ENCODE measurements at regions of chr16 and their contacts with region 1.

Region 1: DNA sequence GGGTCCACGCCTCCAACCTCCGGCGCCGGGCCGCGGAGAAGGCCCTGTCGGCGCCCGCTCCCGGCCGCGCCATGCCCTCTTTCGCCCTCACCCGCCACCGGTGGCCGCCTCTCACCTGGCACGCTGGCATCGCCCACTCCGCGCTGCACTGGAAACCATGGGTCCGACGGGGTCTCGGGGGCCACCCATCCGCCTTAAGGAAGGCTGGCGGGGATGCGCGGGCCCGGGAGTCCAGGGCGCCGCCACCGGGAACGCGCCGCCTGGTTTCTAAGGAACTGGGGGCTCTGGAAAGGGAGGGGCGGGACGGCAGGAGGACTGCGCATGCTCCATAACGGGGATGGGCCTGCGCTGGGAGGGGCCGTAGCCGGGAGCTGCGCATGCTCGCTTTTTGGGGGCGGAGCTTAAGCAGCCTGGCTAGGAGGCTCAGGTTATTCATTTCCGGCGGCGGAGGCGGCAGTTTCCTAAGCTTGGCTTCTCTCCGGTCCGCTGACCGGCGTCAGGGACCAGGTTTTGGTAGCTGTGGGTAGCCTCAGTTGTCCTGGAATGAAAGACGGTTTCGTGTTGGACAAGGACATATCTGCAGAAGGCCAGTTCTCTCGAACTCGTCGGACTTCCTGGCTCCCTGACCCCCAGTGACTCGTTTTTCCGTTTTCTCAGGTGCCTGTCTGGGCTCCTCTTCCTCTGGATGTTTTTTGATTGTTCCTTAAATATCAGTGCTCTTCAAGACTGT is at the start of gene GFOD2:
- DNase-seq: peak; percentile 95 to 100 (median 97)
- ATAC-seq: peak; percentile 96
- H3K4me3 ChIP-seq: peak within 1 kb of the TSS; percentile 68 to 90
- H3K4me3 Mint-ChIP-seq: peak within 1 kb of the TSS; percentile 98
- H3K27ac ChIP-seq: peak within 1 kb of the TSS; percentile 85 to 96
- H3K27ac Mint-ChIP-seq: peak within 1 kb of the TSS; percentile 99
- H3K4me1 ChIP-seq: peaks cover 15% of the 10 kb centered on the region
- H3K4me1 Mint-ChIP-seq: peaks cover 32% of the 10 kb centered on the region
- H3K27me3 ChIP-seq: no peaks in the 10 kb centered on the region
- H3K27me3 Mint-ChIP-seq: no peaks in the 10 kb centered on the region
- CTCF ChIP-seq: no peak
- total RNA-seq, gene GFOD2: 2.4 to 2.6 TPM

Region 2: DNA sequence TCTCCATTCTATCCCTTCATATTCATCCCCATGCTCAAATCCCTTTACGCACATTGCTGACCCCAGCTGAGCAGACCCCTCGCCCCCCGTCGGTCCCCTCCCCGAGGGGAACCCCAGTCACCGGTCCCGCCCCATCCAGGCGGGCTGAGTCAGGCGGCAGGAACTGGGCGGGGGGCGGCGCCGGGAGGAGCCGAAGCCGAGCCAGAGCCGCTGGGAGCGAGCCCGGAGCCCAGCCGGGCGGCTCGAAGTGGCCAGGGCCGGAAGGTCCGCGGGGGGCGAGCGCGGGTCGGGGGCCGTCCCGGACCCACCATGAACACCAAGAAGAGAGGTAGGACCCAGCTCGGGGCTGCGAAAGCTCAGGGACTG is 182.0 kb before region 1 on chr16:
- CTCF ChIA-PET with region 1: no interaction called
- POLR2A ChIA-PET with region 1: no interaction called
- intact Hi-C with region 1: loop called in 1 of 2 experiments (anchors 5 kb)
- DNase-seq: peak in 6 of 9 experiments; percentile 38 to 77 (median 58)
- ATAC-seq: peak; percentile 51
- H3K4me3 ChIP-seq: peak overlapping the region; percentile 83 to 85
- H3K4me3 Mint-ChIP-seq: peak overlapping the region; percentile 84
- H3K27ac ChIP-seq: peak overlapping the region; percentile 37 to 75
- H3K27ac Mint-ChIP-seq: peak overlapping the region; percentile 82
- H3K4me1 ChIP-seq: peaks cover 17% of the 10 kb centered on the region
- H3K4me1 Mint-ChIP-seq: peaks cover 33% of the 10 kb centered on the region
- H3K27me3 ChIP-seq: no peaks in the 10 kb centered on the region
- H3K27me3 Mint-ChIP-seq: no peaks in the 10 kb centered on the region
- CTCF ChIP-seq: no peak

Region 3: DNA sequence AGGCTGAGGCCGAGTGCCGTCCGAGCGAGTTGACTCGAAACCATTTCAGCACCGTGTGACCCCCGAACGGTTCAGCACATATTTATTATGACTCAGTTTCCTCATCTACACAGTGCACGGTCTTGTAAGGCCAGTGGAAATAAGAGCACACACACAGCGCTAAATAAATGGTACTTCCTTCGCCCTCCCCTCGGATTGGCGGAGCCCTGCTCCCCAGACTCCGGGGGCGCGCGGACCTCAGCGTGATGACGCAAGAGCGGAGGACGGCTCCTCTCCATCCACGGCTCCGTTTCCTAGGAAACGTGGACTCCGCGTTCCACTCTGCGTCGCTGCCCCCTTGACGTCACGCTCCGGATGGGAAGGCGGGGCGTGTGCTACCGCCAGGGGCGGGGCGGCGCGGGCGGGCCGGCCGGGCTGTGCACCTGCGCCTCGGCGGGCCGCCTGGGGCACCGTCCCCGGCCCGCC is 58.6 kb before region 1 on chr16 and contains the start of gene PARD6A:
- CTCF ChIA-PET with region 1: no interaction called
- POLR2A ChIA-PET with region 1: no interaction called
- intact Hi-C with region 1: loop called in 1 of 2 experiments (anchors 1 kb)
- DNase-seq: peak; percentile 89 to 99 (median 95)
- ATAC-seq: peak; percentile 76
- H3K4me3 ChIP-seq: peak within 1 kb of the TSS; percentile 83 to 100
- H3K4me3 Mint-ChIP-seq: peak within 1 kb of the TSS; percentile 94
- H3K27ac ChIP-seq: peak within 1 kb of the TSS; percentile 92 to 100
- H3K27ac Mint-ChIP-seq: peak within 1 kb of the TSS; percentile 93
- H3K4me1 ChIP-seq: peaks cover 20% of the 10 kb centered on the region
- H3K4me1 Mint-ChIP-seq: peaks cover 23% of the 10 kb centered on the region
- H3K27me3 ChIP-seq: no peaks in the 10 kb centered on the region
- H3K27me3 Mint-ChIP-seq: no peaks in the 10 kb centered on the region
- CTCF ChIP-seq: no peak
- total RNA-seq, gene PARD6A: 3.0 to 3.1 TPM

Region 4: DNA sequence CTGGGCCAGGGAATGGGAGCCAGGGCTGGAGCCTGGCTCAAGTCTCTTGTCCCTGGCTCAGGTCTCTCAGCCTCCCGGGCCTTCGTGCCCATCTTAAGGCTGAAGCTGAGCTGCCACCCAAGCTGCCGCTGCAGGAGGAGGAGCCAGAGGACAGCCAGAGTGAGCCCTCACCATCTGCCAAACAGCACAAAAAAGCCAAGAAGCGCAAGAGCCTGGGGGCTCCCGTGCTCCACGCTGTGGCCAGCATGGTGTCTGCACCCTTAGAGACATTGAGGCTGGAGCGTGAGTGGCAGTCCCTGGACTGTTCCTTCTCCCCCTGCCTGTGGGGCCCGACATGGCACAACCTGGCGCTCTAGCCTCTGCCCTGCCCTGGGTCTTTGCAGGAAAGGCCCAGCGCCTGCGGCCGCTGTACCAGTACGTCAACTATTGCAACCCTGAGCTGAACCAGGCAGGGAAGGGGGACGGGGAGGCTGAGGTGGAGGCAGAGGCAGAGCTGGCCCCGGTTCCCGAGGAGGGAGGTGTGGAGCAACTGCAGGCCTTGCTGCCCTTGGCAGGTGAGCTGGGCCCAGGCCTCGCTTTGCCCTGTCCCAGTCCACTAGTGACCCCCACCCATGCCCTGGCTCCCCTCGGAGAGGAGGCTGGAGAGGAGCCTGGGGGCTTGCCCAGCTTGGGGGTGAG is 51.3 kb before region 1 on chr16:
- CTCF ChIA-PET with region 1: no interaction called
- POLR2A ChIA-PET with region 1: no interaction called
- intact Hi-C with region 1: loop called in 1 of 2 experiments (anchors 2 kb)
- DNase-seq: peak; percentile 64 to 91 (median 78)
- ATAC-seq: peak; percentile 90
- H3K4me3 ChIP-seq: peak overlapping the region in 1 of 2 experiments; percentile 84
- H3K4me3 Mint-ChIP-seq: peak overlapping the region; percentile 82
- H3K27ac ChIP-seq: peak overlapping the region in 1 of 2 experiments; percentile 38
- H3K27ac Mint-ChIP-seq: no peak overlapping the region
- H3K4me1 ChIP-seq: peaks cover 17% of the 10 kb centered on the region
- H3K4me1 Mint-ChIP-seq: peaks cover 16% of the 10 kb centered on the region
- H3K27me3 ChIP-seq: no peaks in the 10 kb centered on the region
- H3K27me3 Mint-ChIP-seq: no peaks in the 10 kb centered on the region
- CTCF ChIP-seq: peak; percentile 65

Region 5: GRCh38 chr16:67750466-67750865 is 31.3 kb after region 1 on chr16:
- CTCF ChIA-PET with region 1: no interaction called
- POLR2A ChIA-PET with region 1: no interaction called
- intact Hi-C with region 1: no loop called
- DNase-seq: no peak
- ATAC-seq: no peak
- H3K4me3 ChIP-seq: no peak overlapping the region
- H3K4me3 Mint-ChIP-seq: no peak overlapping the region
- H3K27ac ChIP-seq: no peak overlapping the region
- H3K27ac Mint-ChIP-seq: no peak overlapping the region
- H3K4me1 ChIP-seq: no peaks in the 10 kb centered on the region
- H3K4me1 Mint-ChIP-seq: no peaks in the 10 kb centered on the region
- H3K27me3 ChIP-seq: no peaks in the 10 kb centered on the region
- H3K27me3 Mint-ChIP-seq: no peaks in the 10 kb centered on the region
- CTCF ChIP-seq: no peak

Region 6: DNA sequence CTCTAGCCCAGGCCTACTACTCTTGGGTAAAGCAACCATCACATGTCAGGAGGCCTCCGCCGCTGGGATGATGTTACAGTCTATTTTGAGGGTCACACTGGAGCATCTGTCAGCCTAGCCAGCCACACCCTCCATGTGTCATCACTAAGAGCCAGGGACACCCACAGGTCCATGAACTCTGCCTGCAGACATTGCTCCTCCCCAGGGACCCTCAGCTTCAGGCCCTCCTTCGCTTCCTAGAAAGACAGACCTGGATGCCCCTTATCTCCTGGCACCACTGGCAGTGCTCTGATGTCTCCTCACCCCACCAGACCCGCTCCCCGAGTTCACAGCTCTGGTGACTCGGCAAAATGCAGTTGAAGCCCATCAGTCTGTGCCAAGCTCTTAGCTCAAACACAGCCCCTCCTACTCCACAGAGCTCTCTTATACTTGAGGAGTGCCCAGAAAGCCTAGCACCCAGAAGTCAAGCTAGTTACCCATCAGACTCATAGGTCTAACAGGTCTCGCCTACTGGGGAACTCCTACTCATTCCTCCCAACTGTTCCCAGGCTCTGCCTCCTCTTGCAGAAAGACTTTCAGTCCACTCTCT is 81.2 kb after region 1 on chr16:
- CTCF ChIA-PET with region 1: no interaction called
- POLR2A ChIA-PET with region 1: no interaction called
- intact Hi-C with region 1: loop called in 1 of 2 experiments (anchors 1 kb)
- DNase-seq: no peak
- ATAC-seq: no peak
- H3K4me3 ChIP-seq: no peak overlapping the region
- H3K4me3 Mint-ChIP-seq: no peak overlapping the region
- H3K27ac ChIP-seq: no peak overlapping the region
- H3K27ac Mint-ChIP-seq: peak overlapping the region; percentile 25
- H3K4me1 ChIP-seq: peaks cover 41% of the 10 kb centered on the region
- H3K4me1 Mint-ChIP-seq: peaks cover 71% of the 10 kb centered on the region
- H3K27me3 ChIP-seq: no peaks in the 10 kb centered on the region
- H3K27me3 Mint-ChIP-seq: no peaks in the 10 kb centered on the region
- CTCF ChIP-seq: no peak

Region 7: DNA sequence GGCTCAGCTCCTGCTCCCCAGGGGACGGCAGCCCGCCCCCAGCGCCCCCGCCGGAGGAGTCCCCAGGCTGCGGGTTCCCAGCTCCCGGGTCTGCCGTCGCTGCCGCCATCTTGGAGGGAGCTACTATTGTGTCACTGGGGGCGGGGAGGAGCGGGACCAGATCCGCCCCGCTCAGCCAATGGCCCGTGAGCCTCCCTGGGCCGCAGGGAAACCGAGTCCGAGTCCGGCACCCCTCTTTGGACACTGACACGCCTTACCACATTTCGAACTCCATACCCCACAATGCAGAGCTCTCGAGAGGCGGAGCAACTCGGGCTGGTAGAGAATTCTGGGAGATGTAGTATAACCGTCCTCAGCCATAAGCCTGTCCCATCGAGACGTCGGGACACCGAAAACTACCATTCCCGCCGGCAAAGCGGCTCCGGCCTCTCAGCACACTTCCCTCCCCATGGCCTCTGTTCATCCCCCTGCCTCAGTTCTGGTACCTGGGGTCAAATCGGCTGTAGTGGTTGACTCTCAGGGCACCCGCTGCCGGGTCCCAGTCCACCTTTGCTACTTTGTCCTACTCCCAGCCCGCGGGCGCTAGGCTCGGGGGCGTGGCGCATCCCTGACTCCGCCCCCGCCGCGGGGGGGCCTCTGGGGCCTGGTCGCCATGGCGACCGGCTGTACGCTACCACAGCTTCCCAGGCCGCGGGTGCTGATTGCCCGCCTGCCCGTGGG is 87.4 kb after region 1 on chr16 and contains the starts of genes RANBP10 and TSNAXIP1:
- CTCF ChIA-PET with region 1: no interaction called
- POLR2A ChIA-PET with region 1: interaction called, 6 read pairs
- intact Hi-C with region 1: loop called (anchors 1 kb)
- DNase-seq: peak; percentile 92 to 99 (median 94)
- ATAC-seq: peak; percentile 91
- H3K4me3 ChIP-seq: peak within 1 kb of the TSS; percentile 89 to 96
- H3K4me3 Mint-ChIP-seq: peak within 1 kb of the TSS; percentile 95
- H3K27ac ChIP-seq: peak within 1 kb of the TSS; percentile 77 to 85
- H3K27ac Mint-ChIP-seq: peak within 1 kb of the TSS; percentile 91
- H3K4me1 ChIP-seq: peaks cover 35% of the 10 kb centered on the region
- H3K4me1 Mint-ChIP-seq: peaks cover 44% of the 10 kb centered on the region
- H3K27me3 ChIP-seq: no peaks in the 10 kb centered on the region
- H3K27me3 Mint-ChIP-seq: no peaks in the 10 kb centered on the region
- CTCF ChIP-seq: no peak
- total RNA-seq, gene RANBP10: 14.6 to 14.8 TPM
- total RNA-seq, gene TSNAXIP1: 0.31 to 0.41 TPM

Region 8: DNA sequence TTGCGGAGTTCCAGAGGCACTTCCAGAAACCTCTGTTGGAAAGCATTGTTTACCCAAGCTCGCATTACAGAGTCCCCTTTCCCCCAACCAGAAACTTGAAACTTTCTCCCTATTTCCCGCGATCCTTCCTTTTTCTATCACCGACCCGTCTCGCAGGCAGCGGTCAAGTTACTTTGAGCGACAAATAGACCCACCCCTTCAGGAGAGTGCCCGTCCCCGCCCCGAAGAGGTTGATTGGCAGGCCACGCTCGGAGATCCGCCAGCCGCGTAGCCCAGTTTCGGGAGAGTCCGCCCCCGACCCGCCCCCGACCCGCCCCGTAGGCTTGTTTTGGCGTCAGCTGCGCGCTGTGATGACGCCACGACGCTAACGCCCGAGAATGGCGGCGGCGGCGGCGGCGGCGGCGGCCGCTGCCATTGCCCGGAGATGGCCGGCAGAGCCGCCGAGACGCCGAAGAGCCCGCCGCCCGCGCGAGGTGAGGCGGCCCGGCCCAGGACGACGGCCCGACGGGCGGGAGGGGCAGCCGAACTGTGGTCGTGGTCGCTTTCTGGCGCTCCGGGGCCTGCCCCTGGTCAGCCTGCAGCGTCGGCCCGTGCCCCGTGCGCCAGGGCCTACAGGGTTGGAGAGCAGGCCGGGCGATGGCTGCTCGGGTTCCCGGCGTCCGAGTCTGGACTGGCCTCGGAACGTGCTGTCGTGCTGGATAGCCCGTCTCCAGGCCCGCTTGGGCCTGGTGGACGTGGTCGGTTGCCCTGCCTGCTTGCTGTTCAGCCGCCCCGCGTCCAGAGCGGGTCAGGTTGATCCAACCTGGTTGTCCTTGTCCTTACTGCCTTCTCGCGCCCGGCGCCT is 173.9 kb after region 1 on chr16 and contains the start of gene PSKH1:
- CTCF ChIA-PET with region 1: no interaction called
- POLR2A ChIA-PET with region 1: no interaction called
- intact Hi-C with region 1: loop called in 1 of 2 experiments (anchors 1 kb)
- DNase-seq: peak; percentile 89 to 96 (median 93)
- ATAC-seq: peak; percentile 99
- H3K4me3 ChIP-seq: peak within 1 kb of the TSS; percentile 81 to 93
- H3K4me3 Mint-ChIP-seq: peak within 1 kb of the TSS; percentile 95
- H3K27ac ChIP-seq: peak within 1 kb of the TSS; percentile 90 to 93
- H3K27ac Mint-ChIP-seq: peak within 1 kb of the TSS; percentile 96
- H3K4me1 ChIP-seq: peaks cover 24% of the 10 kb centered on the region
- H3K4me1 Mint-ChIP-seq: peaks cover 40% of the 10 kb centered on the region
- H3K27me3 ChIP-seq: no peaks in the 10 kb centered on the region
- H3K27me3 Mint-ChIP-seq: no peaks in the 10 kb centered on the region
- CTCF ChIP-seq: no peak
- total RNA-seq, gene PSKH1: 13.3 to 13.4 TPM